ENCODE measurements at regions of chr20 and their contacts with region 1.

Region 1: GRCh38 chr20:38692436-38693411 is 31.6 kb upstream of the SLC32A1 start:
- DNase-seq: peak in 1 of 2 donors; percentile 20
- H3K4me3 ChIP-seq: no peak overlapping the region
- CTCF ChIP-seq: no peak
- POLR2A ChIP-seq: no peak

Region 2: GRCh38 chr20:37670351-37670791 is 1022.4 kb before region 1 on chr20:
- intact Hi-C with region 1: loop called (anchors 5 kb)
- DNase-seq: peak in 1 of 2 donors; percentile 88
- H3K4me3 ChIP-seq: no peak overlapping the region
- CTCF ChIP-seq: no peak
- POLR2A ChIP-seq: no peak

Region 3: DNA sequence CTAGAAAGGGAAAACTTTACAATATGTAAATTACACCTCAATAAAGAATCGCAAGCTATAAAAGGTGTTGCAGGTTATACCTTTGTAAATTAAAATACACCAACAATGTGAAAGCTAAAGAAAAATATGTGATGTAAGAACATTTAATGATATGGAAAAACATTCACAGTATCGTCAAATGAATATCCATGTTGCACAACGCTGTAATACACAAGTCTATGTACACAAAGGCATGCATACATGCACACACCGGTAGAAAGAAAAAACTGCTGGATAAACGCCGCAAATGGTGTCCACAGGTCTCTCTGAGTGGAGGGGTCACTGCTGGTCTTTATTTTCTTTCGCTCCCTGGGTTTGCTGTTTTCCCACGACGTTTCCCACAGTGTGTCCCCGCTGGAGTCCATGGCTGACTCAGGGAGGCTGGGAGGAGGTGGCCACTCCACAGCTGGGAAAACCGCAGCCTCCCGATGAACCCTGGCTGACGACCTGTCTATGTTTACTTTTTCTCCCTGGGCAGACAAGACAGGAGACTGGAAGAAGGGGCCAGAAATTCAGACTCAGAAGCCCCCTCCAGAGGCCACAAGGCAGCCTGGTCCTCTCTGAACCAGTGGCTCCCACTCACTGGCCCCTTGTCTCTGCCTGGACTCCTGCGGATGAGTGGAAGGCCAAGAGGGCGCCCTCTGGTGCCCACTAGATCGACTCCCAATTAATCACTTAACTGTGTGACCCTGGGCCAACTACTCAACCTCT is 401.7 kb before region 1 on chr20:
- intact Hi-C with region 1: no loop called
- DNase-seq: no peak
- H3K4me3 ChIP-seq: no peak overlapping the region
- CTCF ChIP-seq: no peak
- POLR2A ChIP-seq: no peak